Panc1 (cell line): ENCODE measurements at regions of chr6 and their contacts with region 1.

Region 1: DNA sequence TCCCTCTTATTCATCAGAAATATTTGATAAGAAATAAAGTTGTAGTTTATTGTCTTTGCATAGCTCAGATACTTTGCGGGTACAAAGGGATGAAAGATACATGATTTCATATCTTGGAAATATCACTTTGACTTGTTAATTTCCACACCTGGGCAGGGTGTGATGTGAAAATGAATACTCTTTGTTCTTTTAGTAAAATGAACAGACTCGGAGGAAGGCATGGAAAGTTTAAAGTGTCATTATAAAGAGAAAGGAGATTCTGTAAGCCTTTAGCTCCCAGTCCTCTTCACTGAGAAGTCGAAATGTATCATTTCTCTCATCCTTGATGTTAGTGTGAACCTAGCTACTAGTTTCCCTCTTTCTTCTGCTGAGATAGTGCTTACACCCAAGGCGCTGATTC is 36.7 kb upstream of the AKIRIN2 start:
- DNase-seq: no peak
- ATAC-seq: no peak
- H3K4me3 ChIP-seq: no peak overlapping the region
- H3K27ac ChIP-seq: no peak overlapping the region
- H3K4me1 ChIP-seq: no peaks in the 10 kb centered on the region; the same call in 1 of the 2 replicates
- H3K27me3 ChIP-seq: no peaks in the 10 kb centered on the region
- CTCF ChIP-seq: no peak

Region 2: GRCh38 chr6:87772597-87773530 is 34.1 kb after region 1 on chr6:
- CTCF ChIA-PET with region 1: no interaction called
- POLR2A ChIA-PET with region 1: interaction called, 16 read pairs
- in situ Hi-C with region 1: no loop called
- intact Hi-C with region 1: no loop called
- DNase-seq: no peak
- ATAC-seq: no peak
- H3K4me3 ChIP-seq: no peak overlapping the region
- H3K27ac ChIP-seq: no peak overlapping the region
- H3K4me1 ChIP-seq: no peaks in the 10 kb centered on the region
- H3K27me3 ChIP-seq: no peaks in the 10 kb centered on the region
- CTCF ChIP-seq: no peak